Head of caudate nucleus (tissue), 42 donors: ENCODE measurements at regions of chr13 and their contacts with region 1.

Region 1: DNA sequence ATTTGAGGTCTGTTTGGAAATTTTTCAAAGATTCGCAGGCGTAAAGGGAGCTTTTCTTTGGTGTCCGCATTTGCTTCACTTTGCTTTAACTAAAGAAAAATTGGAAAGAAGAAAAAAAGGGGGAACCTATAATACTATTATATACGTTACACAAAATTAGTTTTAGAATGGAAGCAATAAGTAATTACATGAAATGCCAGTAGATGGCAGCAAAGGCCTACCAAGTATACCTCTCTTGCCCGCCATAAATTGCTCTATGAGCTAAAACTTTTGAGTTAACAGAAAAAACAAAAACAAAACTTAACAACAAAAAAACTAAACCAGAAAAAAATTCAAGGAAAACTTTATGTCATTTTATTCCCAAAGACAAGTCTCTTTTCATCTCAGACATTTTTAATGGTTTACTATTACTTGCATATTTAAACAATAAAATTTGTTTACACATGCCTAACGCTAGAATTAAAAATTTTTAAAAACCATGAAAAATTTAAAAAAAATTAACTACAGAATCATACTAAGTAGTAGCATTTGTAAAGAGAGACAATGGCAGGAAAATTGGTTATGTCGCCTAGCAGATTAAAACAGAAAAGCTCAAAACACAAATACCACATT is 271.4 kb downstream of the NALCN start:
- DNase-seq: peak in 9 of 42 donors; percentile 17 to 63 (median 33)

Region 2: DNA sequence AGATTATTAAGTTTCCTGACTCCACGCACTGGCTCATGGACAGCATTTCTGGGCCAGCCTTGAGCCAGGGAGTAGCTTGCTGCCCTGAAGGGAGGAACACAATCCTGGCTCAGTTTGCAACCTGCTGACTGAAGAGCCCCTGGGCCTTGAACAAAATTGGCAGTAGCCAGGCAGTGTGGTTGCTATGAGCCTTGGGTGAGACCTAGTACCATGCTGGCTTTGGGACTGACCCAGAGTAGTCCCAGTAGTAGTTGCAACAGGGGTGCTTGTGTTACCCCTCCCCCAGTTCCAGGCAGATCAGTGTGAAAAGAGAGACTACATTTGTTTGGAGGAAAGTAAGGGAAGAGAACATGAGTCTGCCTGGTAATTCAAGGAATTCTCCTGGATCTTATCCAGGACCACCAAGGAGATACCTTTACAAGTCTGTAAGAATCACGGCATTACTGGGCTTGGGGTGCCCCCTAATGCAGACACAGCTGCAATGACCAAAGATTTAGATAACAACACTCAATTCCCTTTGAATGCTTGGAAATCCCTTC is 329.6 kb after region 1 on chr13:
- intact Hi-C with region 1: loop called (anchors 5 kb)
- DNase-seq: peak in 41 of 42 donors; percentile 16 to 81 (median 61)

Region 3: GRCh38 chr13:101773062-101773461 is 628.1 kb after region 1 on chr13:
- intact Hi-C with region 1: no loop called
- DNase-seq: no peak